CD4-positive, alpha-beta memory T cell (primary cell): ENCODE measurements at regions of chr17 and their contacts with region 1.

Region 1: DNA sequence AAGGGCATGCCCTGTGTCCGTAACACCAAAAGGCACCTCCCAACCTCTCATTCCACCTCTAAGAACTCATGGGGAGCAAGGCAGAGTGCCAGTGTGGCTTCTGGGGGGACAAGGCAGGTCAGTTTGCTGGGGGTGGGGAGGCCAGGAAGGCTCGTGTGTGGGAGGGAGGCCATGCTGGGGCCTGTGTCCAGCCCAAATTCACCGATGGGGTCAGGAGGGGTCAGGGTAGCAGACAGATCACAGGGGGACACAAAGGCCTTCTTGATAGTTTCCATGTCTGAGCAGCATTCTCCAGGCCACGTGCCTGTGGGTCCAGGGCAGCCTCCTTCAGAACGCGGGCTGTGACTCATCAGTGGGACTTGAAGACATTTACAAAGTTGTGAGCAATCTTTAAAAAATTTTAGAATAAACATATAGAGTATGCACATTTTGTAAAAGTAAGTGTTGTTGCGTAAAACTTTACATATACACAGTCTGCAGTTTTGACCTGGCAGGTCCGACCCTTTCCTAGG is 20.9 kb downstream of the SPACA3 start:
- DNase-seq: no peak
- H3K4me3 ChIP-seq: no peak overlapping the region
- H3K4me3 Mint-ChIP-seq: no peak overlapping the region
- H3K27ac ChIP-seq: no peak overlapping the region
- H3K27ac Mint-ChIP-seq: no peak overlapping the region
- H3K4me1 ChIP-seq: no peaks in the 10 kb centered on the region
- H3K4me1 Mint-ChIP-seq: no peaks in the 10 kb centered on the region
- H3K27me3 ChIP-seq: no peaks in the 10 kb centered on the region
- H3K27me3 Mint-ChIP-seq: peaks cover 6 to 11% of the 10 kb centered on the region in 2 donors

Region 2: GRCh38 chr17:32997753-32998632 is 14.6 kb before region 1 on chr17:
- CTCF ChIA-PET with region 1: interaction called, 20 read pairs
- POLR2A ChIA-PET with region 1: no interaction called
- intact Hi-C with region 1: no loop called
- DNase-seq: peak; percentile 34 to 52 (median 50)
- H3K4me3 ChIP-seq: no peak overlapping the region
- H3K4me3 Mint-ChIP-seq: peak overlapping the region in 5 of 8 donors; percentile 11 to 42 (median 17)
- H3K27ac ChIP-seq: no peak overlapping the region
- H3K27ac Mint-ChIP-seq: no peak overlapping the region
- H3K4me1 ChIP-seq: peaks cover 7% of the 10 kb centered on the region
- H3K4me1 Mint-ChIP-seq: peaks cover 4 to 6% (median 5%) of the 10 kb centered on the region in 4 donors
- H3K27me3 ChIP-seq: no peaks in the 10 kb centered on the region
- H3K27me3 Mint-ChIP-seq: peaks cover 6 to 11% of the 10 kb centered on the region in 2 donors

Region 3: GRCh38 chr17:33106525-33107165 is 94.1 kb after region 1 on chr17:
- CTCF ChIA-PET with region 1: no interaction called
- POLR2A ChIA-PET with region 1: no interaction called
- intact Hi-C with region 1: no loop called
- DNase-seq: no peak
- H3K4me3 ChIP-seq: no peak overlapping the region
- H3K4me3 Mint-ChIP-seq: no peak overlapping the region
- H3K27ac ChIP-seq: no peak overlapping the region
- H3K27ac Mint-ChIP-seq: no peak overlapping the region
- H3K4me1 ChIP-seq: no peaks in the 10 kb centered on the region
- H3K4me1 Mint-ChIP-seq: no peaks in the 10 kb centered on the region
- H3K27me3 ChIP-seq: no peaks in the 10 kb centered on the region
- H3K27me3 Mint-ChIP-seq: peaks cover 6 to 19% of the 10 kb centered on the region in 2 donors